Activated CD8-positive, alpha-beta T cell treated with anti-CD3 and anti-CD28 coated beads, Interleukin-2, amount 10 ng/mL, durations not matched to agents 7 days and 5 days (primary cell): ENCODE measurements at regions of chr5 and their contacts with region 1.

Region 1: GRCh38 chr5:111550279-111551020 is 38.1 kb upstream of the STARD4 start:
- DNase-seq: peak; percentile 84
- ATAC-seq: peak; percentile 94
- H3K4me3 Mint-ChIP-seq: no peak overlapping the region
- H3K27ac Mint-ChIP-seq: no peak overlapping the region
- H3K4me1 Mint-ChIP-seq: peaks cover 13% of the 10 kb centered on the region
- H3K27me3 Mint-ChIP-seq: peaks cover 2% of the 10 kb centered on the region

Region 2: GRCh38 chr5:111158105-111158744 is 392.2 kb before region 1 on chr5:
- CTCF ChIA-PET with region 1: interaction called, 11 read pairs
- POLR2A ChIA-PET with region 1: no interaction called
- DNase-seq: peak; percentile 86
- ATAC-seq: peak; percentile 72
- H3K4me3 Mint-ChIP-seq: no peak overlapping the region
- H3K27ac Mint-ChIP-seq: no peak overlapping the region
- H3K4me1 Mint-ChIP-seq: peaks cover 2% of the 10 kb centered on the region
- H3K27me3 Mint-ChIP-seq: no peaks in the 10 kb centered on the region

Region 3: GRCh38 chr5:111530298-111530740 is 20.1 kb before region 1 on chr5:
- CTCF ChIA-PET with region 1: interaction called, 38 read pairs
- POLR2A ChIA-PET with region 1: interaction called, 4 read pairs
- DNase-seq: peak; percentile 91
- ATAC-seq: peak; percentile 100
- H3K4me3 Mint-ChIP-seq: peak overlapping the region; percentile 6
- H3K27ac Mint-ChIP-seq: peak overlapping the region; percentile 84
- H3K4me1 Mint-ChIP-seq: peaks cover 20% of the 10 kb centered on the region
- H3K27me3 Mint-ChIP-seq: peaks cover 2% of the 10 kb centered on the region

Region 4: GRCh38 chr5:111757355-111758283 is 207.2 kb after region 1 on chr5:
- CTCF ChIA-PET with region 1: interaction called, 11 read pairs
- POLR2A ChIA-PET with region 1: interaction called, 4 read pairs
- DNase-seq: peak; percentile 91
- ATAC-seq: peak; percentile 91
- H3K4me3 Mint-ChIP-seq: peak overlapping the region; percentile 84
- H3K27ac Mint-ChIP-seq: peak overlapping the region; percentile 89
- H3K4me1 Mint-ChIP-seq: peaks cover 26% of the 10 kb centered on the region
- H3K27me3 Mint-ChIP-seq: peaks cover 5% of the 10 kb centered on the region

Region 5: GRCh38 chr5:111820072-111820471 is 269.6 kb after region 1 on chr5:
- CTCF ChIA-PET with region 1: interaction called, 13 read pairs
- POLR2A ChIA-PET with region 1: no interaction called
- DNase-seq: no peak
- ATAC-seq: no peak
- H3K4me3 Mint-ChIP-seq: no peak overlapping the region
- H3K27ac Mint-ChIP-seq: no peak overlapping the region
- H3K4me1 Mint-ChIP-seq: no peaks in the 10 kb centered on the region
- H3K27me3 Mint-ChIP-seq: no peaks in the 10 kb centered on the region

Region 6: DNA sequence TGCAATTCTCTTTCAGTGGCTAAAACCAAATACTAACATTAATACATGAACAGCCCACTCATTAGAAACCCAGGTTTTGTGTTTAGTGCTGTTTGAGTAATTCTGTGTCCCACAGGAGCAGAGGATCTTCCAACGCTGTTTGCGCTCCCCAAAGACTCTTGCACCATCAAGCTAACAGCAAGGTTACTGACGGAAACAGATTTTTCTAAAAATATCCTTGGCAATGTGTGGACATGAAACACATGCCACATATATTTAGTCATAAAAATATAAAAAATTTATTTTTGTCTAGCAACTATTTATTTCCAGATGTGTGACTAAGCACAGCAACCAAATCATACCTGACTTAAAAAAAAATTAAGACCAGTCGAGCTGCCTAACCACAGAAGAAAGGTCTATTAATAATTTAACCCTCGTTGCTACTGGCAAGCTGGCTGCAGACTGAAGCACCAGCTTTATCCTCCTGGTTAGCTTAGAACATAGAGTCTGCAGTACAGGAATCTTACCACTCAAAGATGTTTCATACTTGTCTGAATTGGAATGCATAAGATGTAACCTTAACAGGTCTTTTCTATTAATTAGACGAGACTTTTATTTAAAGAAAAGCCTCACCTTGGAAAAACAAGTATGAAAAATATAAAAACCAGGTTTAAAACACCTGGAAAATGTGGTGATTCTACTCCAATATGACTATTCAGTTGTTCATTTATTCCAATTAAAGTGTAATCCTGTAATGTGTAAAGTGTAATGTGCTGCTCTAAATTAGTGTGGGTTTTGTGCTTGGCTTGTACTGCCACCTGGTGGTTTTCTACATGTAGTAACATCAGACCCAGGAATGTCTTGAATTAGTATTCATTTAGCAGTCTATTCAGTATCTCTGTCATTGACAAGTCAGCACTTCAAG is 596.1 kb after region 1 on chr5:
- CTCF ChIA-PET with region 1: interaction called, 33 read pairs
- POLR2A ChIA-PET with region 1: no interaction called
- DNase-seq: peak; percentile 75
- ATAC-seq: peak; percentile 87
- H3K4me3 Mint-ChIP-seq: no peak overlapping the region
- H3K27ac Mint-ChIP-seq: no peak overlapping the region
- H3K4me1 Mint-ChIP-seq: no peaks in the 10 kb centered on the region
- H3K27me3 Mint-ChIP-seq: peaks cover 3% of the 10 kb centered on the region